ENCODE measurements at regions of chr7 and their contacts with region 1.

Region 1: GRCh38 chr7:7529328-7529727 is 6.3 kb downstream of the COL28A1 start:
- DNase-seq: no peak

Region 2: GRCh38 chr7:6889252-6889812 is 640.0 kb before region 1 on chr7:
- in situ Hi-C with region 1: no loop called
- DNase-seq: no peak

Region 3: DNA sequence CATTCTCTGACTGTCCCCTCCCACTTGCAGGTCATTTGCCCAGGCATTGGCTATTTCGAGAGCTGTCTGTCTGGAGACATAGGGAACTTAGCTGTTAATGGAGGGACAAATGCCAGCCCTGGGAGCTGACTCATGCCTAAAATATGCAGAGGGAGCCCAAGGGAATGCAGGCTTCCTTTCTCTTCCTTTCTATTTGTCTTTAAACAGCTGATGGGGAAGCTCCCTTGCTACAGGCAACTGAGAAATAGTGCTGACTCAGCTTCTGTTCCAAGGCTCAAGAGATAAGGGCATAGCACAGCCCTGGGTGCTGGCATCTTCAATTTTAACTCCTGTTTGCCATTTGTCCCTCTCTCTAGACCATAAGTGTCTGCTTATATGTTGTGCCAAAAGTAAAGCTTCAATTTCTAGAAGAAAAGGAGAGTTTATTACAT is 429.7 kb before region 1 on chr7:
- in situ Hi-C with region 1: loop called (anchors 25 kb)
- DNase-seq: peak; percentile 63